ENCODE measurements at regions of chr9 and their contacts with region 1.

Region 1: GRCh38 chr9:71582347-71582746 is 186.0 kb downstream of the CEMIP2 start:
- DNase-seq: no peak
- ATAC-seq: no peak
- H3K4me3 ChIP-seq: no peak overlapping the region
- H3K4me3 Mint-ChIP-seq: no peak overlapping the region
- H3K27ac ChIP-seq: no peak overlapping the region
- H3K27ac Mint-ChIP-seq: no peak overlapping the region
- H3K4me1 ChIP-seq: no peaks in the 10 kb centered on the region
- H3K4me1 Mint-ChIP-seq: no peaks in the 10 kb centered on the region
- H3K27me3 ChIP-seq: no peaks in the 10 kb centered on the region
- H3K27me3 Mint-ChIP-seq: peaks cover 5% of the 10 kb centered on the region
- CTCF ChIP-seq: no peak

Region 2: GRCh38 chr9:71628247-71628646 is 45.9 kb after region 1 on chr9:
- CTCF ChIA-PET with region 1: no interaction called
- POLR2A ChIA-PET with region 1: no interaction called
- intact Hi-C with region 1: loop called in 1 of 2 experiments (anchors 2 kb)
- DNase-seq: peak in 2 of 9 experiments; percentile 34 to 48
- ATAC-seq: no peak
- H3K4me3 ChIP-seq: no peak overlapping the region
- H3K4me3 Mint-ChIP-seq: no peak overlapping the region
- H3K27ac ChIP-seq: no peak overlapping the region
- H3K27ac Mint-ChIP-seq: no peak overlapping the region
- H3K4me1 ChIP-seq: no peaks in the 10 kb centered on the region
- H3K4me1 Mint-ChIP-seq: no peaks in the 10 kb centered on the region
- H3K27me3 ChIP-seq: no peaks in the 10 kb centered on the region
- H3K27me3 Mint-ChIP-seq: no peaks in the 10 kb centered on the region
- CTCF ChIP-seq: peak; percentile 24